H1 (cell line): ENCODE measurements at regions of chr1 and their contacts with region 1.

Region 1: GRCh38 chr1:47192458-47193384 is 2.9 kb upstream of the PDZK1IP1 start:
- DNase-seq: peak; percentile 90 to 91
- H3K4me3 ChIP-seq: no peak overlapping the region
- H3K27ac ChIP-seq: no peak overlapping the region
- H3K4me1 ChIP-seq: peaks cover 5 to 22% (median 12%) of the 10 kb centered on the region in 4 experiments
- H3K27me3 ChIP-seq: peaks cover 0 to 17% (median 11%) of the 10 kb centered on the region in 4 experiments; a peak in 3 of 7 replicates
- CTCF ChIP-seq: peak; percentile 89 to 99 (median 95)
- EP300 ChIP-seq: peak in 1 of 2 experiments; percentile 69; a peak in 1 of 3 replicates
- POLR2A ChIP-seq: no peak
- RAD21 ChIP-seq: peak; percentile 90 to 92

Region 2: GRCh38 chr1:47161298-47162040 is 31.3 kb before region 1 on chr1:
- CTCF ChIA-PET with region 1: no interaction called
- POLR2A ChIA-PET with region 1: no interaction called
- DNase-seq: no peak
- H3K4me3 ChIP-seq: no peak overlapping the region
- H3K27ac ChIP-seq: no peak overlapping the region
- H3K4me1 ChIP-seq: no peaks in the 10 kb centered on the region
- H3K27me3 ChIP-seq: no peaks in the 10 kb centered on the region
- CTCF ChIP-seq: no peak
- EP300 ChIP-seq: no peak
- POLR2A ChIP-seq: no peak
- RAD21 ChIP-seq: no peak

Region 3: GRCh38 chr1:47211796-47212269 is 19.1 kb after region 1 on chr1:
- CTCF ChIA-PET with region 1: interaction called, 38 read pairs
- POLR2A ChIA-PET with region 1: interaction called, 3 read pairs
- DNase-seq: no peak
- H3K4me3 ChIP-seq: no peak overlapping the region
- H3K27ac ChIP-seq: no peak overlapping the region
- H3K4me1 ChIP-seq: peaks cover 5 to 25% (median 16%) of the 10 kb centered on the region in 4 experiments
- H3K27me3 ChIP-seq: peaks cover 2 to 35% (median 27%) of the 10 kb centered on the region in 4 experiments
- CTCF ChIP-seq: no peak
- EP300 ChIP-seq: no peak
- POLR2A ChIP-seq: no peak
- RAD21 ChIP-seq: no peak

Region 4: DNA sequence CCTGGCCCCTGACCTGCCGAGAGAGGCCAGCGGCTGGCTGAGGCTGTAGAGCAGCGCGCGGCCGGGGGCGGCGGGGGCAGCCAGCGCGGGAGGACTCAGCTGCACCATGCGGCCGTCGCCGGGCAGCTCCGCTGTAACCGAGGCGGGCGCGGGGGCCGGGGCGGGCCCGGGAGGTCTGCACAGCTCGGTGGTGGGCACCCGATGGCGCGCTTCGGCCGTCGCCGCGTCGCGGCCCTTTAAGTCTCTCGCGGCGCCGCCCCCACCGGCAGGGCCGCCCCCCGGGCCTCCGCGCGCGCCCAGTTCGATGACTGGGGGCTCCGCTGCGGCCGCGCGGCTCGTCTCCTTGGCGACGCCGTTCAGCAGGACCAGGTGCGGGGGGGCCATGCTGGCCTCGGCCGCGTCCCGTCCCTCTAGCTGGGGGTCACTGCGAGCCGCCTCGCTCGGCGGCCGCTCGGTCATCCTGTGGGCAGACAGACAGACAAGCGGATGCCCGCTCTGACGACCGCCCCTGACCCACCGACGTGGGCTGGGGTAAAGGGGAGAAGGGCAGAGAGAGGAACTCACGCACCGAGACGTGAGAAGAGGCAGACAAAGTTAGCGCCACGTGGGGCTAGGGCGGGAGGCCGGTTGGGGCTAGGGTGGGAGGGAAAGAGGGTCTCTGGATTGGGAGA is 32.8 kb after region 1 on chr1:
- CTCF ChIA-PET with region 1: interaction called, 30 read pairs
- POLR2A ChIA-PET with region 1: interaction called, 3 read pairs
- DNase-seq: no peak
- H3K4me3 ChIP-seq: peak overlapping the region; percentile 3 to 54 (median 20); a peak in 6 of 8 replicates
- H3K27ac ChIP-seq: no peak overlapping the region
- H3K4me1 ChIP-seq: peaks cover 7 to 40% (median 31%) of the 10 kb centered on the region in 4 experiments
- H3K27me3 ChIP-seq: peaks cover 87 to 100% (median 98%) of the 10 kb centered on the region in 4 experiments
- CTCF ChIP-seq: no peak
- EP300 ChIP-seq: no peak
- POLR2A ChIP-seq: no peak
- RAD21 ChIP-seq: no peak

Region 5: GRCh38 chr1:47231301-47232186 is 38.8 kb after region 1 on chr1:
- CTCF ChIA-PET with region 1: interaction called, 30 read pairs
- POLR2A ChIA-PET with region 1: interaction called, 3 read pairs
- DNase-seq: peak in 1 of 2 experiments; percentile 58
- H3K4me3 ChIP-seq: peak overlapping the region; percentile 8 to 59 (median 23); a peak in 7 of 8 replicates
- H3K27ac ChIP-seq: no peak overlapping the region
- H3K4me1 ChIP-seq: peaks cover 11 to 35% (median 25%) of the 10 kb centered on the region in 4 experiments
- H3K27me3 ChIP-seq: peaks cover 87 to 98% (median 97%) of the 10 kb centered on the region in 4 experiments
- CTCF ChIP-seq: no peak
- EP300 ChIP-seq: no peak
- POLR2A ChIP-seq: no peak
- RAD21 ChIP-seq: no peak

Region 6: GRCh38 chr1:47241114-47242113 is 48.7 kb after region 1 on chr1:
- CTCF ChIA-PET with region 1: interaction called, 20 read pairs
- POLR2A ChIA-PET with region 1: no interaction called
- DNase-seq: no peak
- H3K4me3 ChIP-seq: no peak overlapping the region
- H3K27ac ChIP-seq: no peak overlapping the region
- H3K4me1 ChIP-seq: peaks cover 0 to 5% (median 0%) of the 10 kb centered on the region in 4 experiments; a peak in 2 of 7 replicates
- H3K27me3 ChIP-seq: peaks cover under 1 to 6% (median 5%) of the 10 kb centered on the region in 4 experiments; a peak in 5 of 7 replicates
- CTCF ChIP-seq: no peak
- EP300 ChIP-seq: no peak
- POLR2A ChIP-seq: no peak
- RAD21 ChIP-seq: no peak

Region 7: GRCh38 chr1:47262787-47263413 is 70.2 kb after region 1 on chr1:
- CTCF ChIA-PET with region 1: interaction called, 176 read pairs
- POLR2A ChIA-PET with region 1: interaction called, 5 read pairs
- DNase-seq: peak in 1 of 2 experiments; percentile 73
- H3K4me3 ChIP-seq: no peak overlapping the region
- H3K27ac ChIP-seq: no peak overlapping the region
- H3K4me1 ChIP-seq: no peaks in the 10 kb centered on the region
- H3K27me3 ChIP-seq: no peaks in the 10 kb centered on the region
- CTCF ChIP-seq: peak in 2 of 3 experiments; percentile 80 to 82; a peak in 3 of 4 replicates
- EP300 ChIP-seq: no peak
- POLR2A ChIP-seq: no peak
- RAD21 ChIP-seq: peak; percentile 70 to 76